Dendritic cell treated with granulocyte-macrophage colony-stimulating factor and Interleukin-4, amounts not matched to agents 40 ng/mL and 50 ng/mL, for 4 days (primary cell): ENCODE measurements at regions of chr3 and their contacts with region 1.

Region 1: DNA sequence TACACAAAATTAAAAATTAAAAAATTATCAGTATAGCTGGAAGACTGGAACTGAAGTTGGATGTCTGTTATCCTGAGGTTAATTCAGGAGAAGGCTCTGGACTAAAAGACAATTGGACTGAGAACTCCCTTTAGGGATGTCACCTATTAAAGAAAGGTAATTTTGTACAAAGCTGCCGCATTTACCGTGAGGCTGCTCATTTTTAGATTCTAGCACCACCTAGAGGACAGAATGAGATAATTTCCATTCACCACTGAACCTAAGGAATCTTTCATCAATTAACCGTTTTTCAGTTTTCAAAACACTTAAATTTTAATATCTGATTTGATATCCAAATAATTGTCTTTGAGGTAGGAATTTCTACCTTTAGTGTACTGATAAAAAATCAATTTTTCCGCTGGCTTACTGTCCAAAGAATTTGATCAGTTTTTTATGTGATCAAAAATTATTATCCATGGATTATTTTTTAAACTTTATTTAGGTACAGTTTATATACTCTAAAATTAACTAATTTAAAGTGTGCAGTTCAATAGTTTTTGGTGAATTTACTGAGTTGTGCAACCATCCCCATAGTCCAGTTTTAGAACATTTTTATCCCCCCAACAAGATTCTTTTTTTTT is 106.7 kb upstream of the TNIK start:
- H3K4me3 Mint-ChIP-seq: no peak overlapping the region
- H3K27ac Mint-ChIP-seq: no peak overlapping the region
- H3K4me1 Mint-ChIP-seq: peaks cover 8% of the 10 kb centered on the region
- H3K27me3 Mint-ChIP-seq: peaks cover 2% of the 10 kb centered on the region

Region 2: GRCh38 chr3:170961616-170962400 is 605.1 kb before region 1 on chr3:
- intact Hi-C with region 1: loop called (anchors 2 kb)
- H3K4me3 Mint-ChIP-seq: no peak overlapping the region
- H3K27ac Mint-ChIP-seq: no peak overlapping the region
- H3K4me1 Mint-ChIP-seq: no peaks in the 10 kb centered on the region
- H3K27me3 Mint-ChIP-seq: no peaks in the 10 kb centered on the region

Region 3: GRCh38 chr3:171049861-171050444 is 517.0 kb before region 1 on chr3:
- intact Hi-C with region 1: loop called (anchors 1 kb)
- H3K4me3 Mint-ChIP-seq: no peak overlapping the region
- H3K27ac Mint-ChIP-seq: no peak overlapping the region
- H3K4me1 Mint-ChIP-seq: no peaks in the 10 kb centered on the region
- H3K27me3 Mint-ChIP-seq: no peaks in the 10 kb centered on the region

Region 4: GRCh38 chr3:171162986-171163723 is 403.8 kb before region 1 on chr3:
- intact Hi-C with region 1: loop called (anchors 2 kb)
- H3K4me3 Mint-ChIP-seq: no peak overlapping the region
- H3K27ac Mint-ChIP-seq: no peak overlapping the region
- H3K4me1 Mint-ChIP-seq: peaks cover 6% of the 10 kb centered on the region
- H3K27me3 Mint-ChIP-seq: no peaks in the 10 kb centered on the region

Region 5: GRCh38 chr3:171187706-171188290 is 379.1 kb before region 1 on chr3:
- intact Hi-C with region 1: loop called (anchors 2 kb)
- H3K4me3 Mint-ChIP-seq: no peak overlapping the region
- H3K27ac Mint-ChIP-seq: no peak overlapping the region
- H3K4me1 Mint-ChIP-seq: peaks cover 29% of the 10 kb centered on the region
- H3K27me3 Mint-ChIP-seq: no peaks in the 10 kb centered on the region

Region 6: DNA sequence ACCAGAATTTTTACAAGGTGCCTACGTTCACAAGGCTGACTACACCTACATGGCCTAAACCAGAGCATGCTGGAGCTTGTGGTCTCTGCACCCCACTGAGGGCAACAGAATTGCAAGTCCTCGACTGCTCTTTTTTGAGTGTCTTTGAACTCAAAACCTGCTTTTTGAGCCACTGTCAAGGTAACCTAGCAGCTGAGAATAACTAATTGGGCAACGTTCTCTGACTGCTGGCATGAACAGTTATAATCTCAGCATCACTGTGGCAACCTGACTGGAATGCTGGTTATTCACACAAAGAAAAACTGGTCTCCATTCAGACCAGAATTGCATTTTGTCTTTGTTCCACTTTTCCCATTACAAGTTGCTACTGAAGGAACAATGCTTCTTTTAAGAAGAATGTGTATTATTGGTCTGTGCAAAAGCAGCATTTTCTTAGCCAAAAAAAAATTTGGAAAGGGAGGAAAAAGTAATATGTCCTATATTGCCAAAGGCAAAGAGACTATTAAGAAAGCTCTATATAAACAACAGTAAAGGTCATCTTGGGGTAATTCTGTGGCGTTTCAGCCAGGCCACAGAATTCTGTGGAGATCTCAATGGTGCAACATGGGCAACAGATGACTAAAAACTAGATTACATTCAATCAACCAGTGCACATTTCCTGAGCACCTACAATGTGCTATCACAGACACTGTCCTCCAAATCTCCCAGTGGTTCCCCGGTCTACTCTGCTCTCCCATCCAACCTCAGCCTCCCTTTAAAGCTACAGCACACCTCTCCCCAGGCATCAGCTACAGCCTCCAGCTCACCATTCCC is 183.5 kb before region 1 on chr3:
- intact Hi-C with region 1: loop called (anchors 10 kb)
- H3K4me3 Mint-ChIP-seq: no peak overlapping the region
- H3K27ac Mint-ChIP-seq: no peak overlapping the region
- H3K4me1 Mint-ChIP-seq: peaks cover 16% of the 10 kb centered on the region
- H3K27me3 Mint-ChIP-seq: no peaks in the 10 kb centered on the region

Region 7: DNA sequence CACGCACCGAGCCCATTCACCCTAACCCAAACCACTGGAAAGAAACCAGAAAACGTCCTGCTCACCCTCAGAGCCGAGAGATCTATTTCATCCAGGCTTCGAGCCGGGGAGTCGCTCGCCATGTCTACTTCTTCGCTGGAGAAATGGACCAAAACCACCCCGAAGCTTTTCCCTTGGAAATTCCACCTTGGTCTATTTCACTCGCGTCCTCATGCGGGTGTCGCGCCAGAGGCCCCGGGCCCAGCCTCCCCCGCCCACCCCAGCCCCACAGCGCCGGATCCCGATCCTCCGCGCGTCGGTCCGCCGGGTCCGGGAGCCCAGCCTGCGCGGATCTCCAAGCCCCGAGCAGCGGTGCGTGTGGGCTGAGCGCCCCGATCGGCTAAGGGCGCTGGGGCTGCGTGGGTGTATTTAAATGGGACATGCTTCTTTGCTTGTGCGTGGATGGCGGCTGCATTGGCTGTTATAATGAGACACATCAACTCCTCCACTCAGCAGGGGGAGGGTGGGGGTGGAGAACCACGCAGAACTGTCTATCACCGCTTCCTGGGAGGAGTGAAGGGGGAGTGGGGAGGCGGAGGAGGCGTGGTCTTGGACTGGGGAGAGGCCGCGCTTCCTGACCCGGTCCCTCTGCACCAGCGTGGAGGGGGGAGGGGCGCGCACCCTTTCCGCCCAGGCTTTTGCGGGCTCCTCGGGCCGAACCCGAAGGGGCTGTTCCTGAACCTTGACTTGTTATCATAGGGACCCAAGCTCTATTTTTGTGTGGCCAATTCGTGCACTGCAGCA is 106.8 kb before region 1 on chr3 and contains the start of gene TNIK:
- intact Hi-C with region 1: loop called (anchors 10 kb)
- H3K4me3 Mint-ChIP-seq: peak within 1 kb of the TSS; percentile 94
- H3K27ac Mint-ChIP-seq: peak within 1 kb of the TSS; percentile 56
- H3K4me1 Mint-ChIP-seq: peaks cover 40% of the 10 kb centered on the region
- H3K27me3 Mint-ChIP-seq: peaks cover 58% of the 10 kb centered on the region

Region 8: DNA sequence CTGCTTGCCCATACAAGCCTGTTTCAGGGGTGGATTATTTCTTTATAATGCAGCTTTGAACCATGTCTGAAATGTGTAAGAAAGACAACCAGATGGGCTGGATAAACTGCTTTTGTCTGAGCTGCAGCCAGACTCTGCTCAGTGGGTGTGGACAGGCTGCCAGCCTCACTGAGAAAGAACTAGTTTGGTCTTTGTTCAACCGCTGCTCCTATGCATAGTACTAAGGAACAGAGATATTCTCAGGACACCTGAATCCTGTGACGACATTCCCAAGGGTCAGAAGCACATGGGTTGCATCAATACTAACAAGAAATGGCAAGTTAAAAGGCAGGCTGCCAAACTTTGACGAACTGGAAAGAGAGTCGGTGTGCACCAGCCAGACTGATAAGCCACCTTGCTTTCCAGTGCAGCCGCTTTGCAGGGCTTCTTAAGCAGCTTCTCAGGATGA is 186.1 kb after region 1 on chr3:
- intact Hi-C with region 1: no loop called
- H3K4me3 Mint-ChIP-seq: no peak overlapping the region
- H3K27ac Mint-ChIP-seq: no peak overlapping the region
- H3K4me1 Mint-ChIP-seq: peaks cover 20% of the 10 kb centered on the region
- H3K27me3 Mint-ChIP-seq: no peaks in the 10 kb centered on the region